CD4-positive, alpha-beta T cell (primary cell): ENCODE measurements at regions of chr18 and their contacts with region 1.

Region 1: DNA sequence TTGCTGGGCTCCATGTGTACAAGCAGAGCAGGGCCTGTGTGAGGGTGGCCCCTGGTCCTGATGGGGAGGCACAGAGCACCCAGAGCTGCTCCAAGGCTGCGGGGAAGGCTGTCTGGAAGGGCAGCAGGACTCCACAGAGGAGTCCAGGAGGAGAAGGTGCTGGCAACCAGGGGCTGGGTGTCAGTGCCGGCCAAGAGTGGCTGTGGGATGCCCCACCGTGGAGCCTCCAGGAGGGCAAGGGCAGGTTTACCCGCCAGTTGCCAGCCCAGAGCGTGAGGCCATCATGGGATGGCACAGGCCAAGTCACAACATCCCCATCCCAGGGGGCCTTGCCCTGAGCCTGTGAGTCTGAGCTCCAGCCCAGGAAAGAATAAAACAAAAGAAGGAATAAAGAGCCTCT is 241.8 kb downstream of the NAPG start:
- DNase-seq: no peak
- ATAC-seq: no peak
- H3K4me3 ChIP-seq: no peak overlapping the region
- H3K4me3 Mint-ChIP-seq: no peak overlapping the region
- H3K27ac ChIP-seq: no peak overlapping the region
- H3K27ac Mint-ChIP-seq: no peak overlapping the region
- H3K4me1 ChIP-seq: no peaks in the 10 kb centered on the region
- H3K4me1 Mint-ChIP-seq: no peaks in the 10 kb centered on the region
- H3K27me3 ChIP-seq: no peaks in the 10 kb centered on the region
- H3K27me3 Mint-ChIP-seq: peaks cover 9% of the 10 kb centered on the region
- CTCF ChIP-seq: no peak

Region 2: GRCh38 chr18:10546557-10547300 is 220.9 kb before region 1 on chr18:
- CTCF ChIA-PET with region 1: no interaction called
- POLR2A ChIA-PET with region 1: no interaction called
- intact Hi-C with region 1: no loop called
- DNase-seq: no peak
- ATAC-seq: no peak
- H3K4me3 ChIP-seq: no peak overlapping the region
- H3K4me3 Mint-ChIP-seq: no peak overlapping the region
- H3K27ac ChIP-seq: no peak overlapping the region
- H3K27ac Mint-ChIP-seq: no peak overlapping the region
- H3K4me1 ChIP-seq: no peaks in the 10 kb centered on the region
- H3K4me1 Mint-ChIP-seq: no peaks in the 10 kb centered on the region
- H3K27me3 ChIP-seq: no peaks in the 10 kb centered on the region
- H3K27me3 Mint-ChIP-seq: no peaks in the 10 kb centered on the region
- CTCF ChIP-seq: no peak

Region 3: GRCh38 chr18:10822456-10822855 is 54.8 kb after region 1 on chr18:
- CTCF ChIA-PET with region 1: no interaction called
- POLR2A ChIA-PET with region 1: no interaction called
- intact Hi-C with region 1: loop called in 1 of 2 experiments (anchors 10 kb)
- DNase-seq: no peak
- ATAC-seq: no peak
- H3K4me3 ChIP-seq: no peak overlapping the region
- H3K4me3 Mint-ChIP-seq: no peak overlapping the region
- H3K27ac ChIP-seq: no peak overlapping the region
- H3K27ac Mint-ChIP-seq: no peak overlapping the region
- H3K4me1 ChIP-seq: peaks cover 3% of the 10 kb centered on the region
- H3K4me1 Mint-ChIP-seq: peaks cover 5% of the 10 kb centered on the region
- H3K27me3 ChIP-seq: peaks cover 3% of the 10 kb centered on the region in 2 experiments
- H3K27me3 Mint-ChIP-seq: peaks cover 13% of the 10 kb centered on the region
- CTCF ChIP-seq: no peak